AG04449 (cell line): ENCODE measurements at regions of chr15 and their contacts with region 1.

Region 1: GRCh38 chr15:40452296-40453090 is 11.7 kb downstream of the BAHD1 start:
- DNase-seq: no peak
- H3K4me3 ChIP-seq: no peak overlapping the region
- CTCF ChIP-seq: no peak

Region 2: GRCh38 chr15:40427188-40427587 is 25.3 kb before region 1 on chr15:
- CTCF ChIA-PET with region 1: no interaction called
- POLR2A ChIA-PET with region 1: no interaction called
- DNase-seq: no peak
- H3K4me3 ChIP-seq: no peak overlapping the region
- CTCF ChIP-seq: no peak

Region 3: DNA sequence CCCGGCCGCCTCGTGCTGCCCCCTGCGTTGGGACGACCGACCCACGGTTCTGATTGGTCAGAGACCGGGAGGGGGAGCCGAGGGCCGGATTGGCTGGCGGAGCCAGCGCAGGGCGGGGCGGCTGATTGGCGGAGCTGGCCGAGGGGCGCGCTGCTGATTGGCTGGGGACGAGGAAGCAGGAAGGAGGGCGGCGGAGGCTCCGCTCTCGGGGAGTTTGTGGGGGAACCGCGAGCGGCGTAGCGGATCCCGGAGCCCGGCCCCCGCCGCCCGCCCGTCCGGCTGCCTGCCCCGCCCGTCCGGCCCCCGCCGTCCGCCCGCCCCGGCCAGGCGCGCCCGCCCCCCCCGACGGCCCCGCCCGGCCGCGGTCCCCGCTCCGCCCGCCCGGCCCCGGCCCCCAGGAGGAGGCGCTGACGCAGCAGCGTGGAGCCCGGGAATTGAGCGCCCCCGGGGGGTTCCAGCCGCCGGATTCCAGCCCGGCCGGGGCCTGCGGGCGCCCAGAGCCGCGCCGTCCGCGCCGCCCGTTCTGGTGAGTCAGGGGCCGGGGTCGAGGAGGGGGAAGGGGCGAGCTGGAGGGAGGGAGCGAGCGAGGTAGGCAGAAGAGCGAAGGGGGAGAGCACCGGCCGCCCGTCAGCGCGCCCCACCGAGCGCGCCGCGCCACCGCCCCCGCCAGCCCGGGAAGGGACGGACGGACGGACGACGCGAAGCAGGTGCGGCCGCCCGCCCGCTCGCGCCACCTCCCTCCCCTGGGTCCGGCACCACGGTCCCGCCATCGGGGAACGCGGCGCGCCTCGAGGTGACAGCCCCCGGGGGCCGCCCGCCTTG is 11.5 kb before region 1 on chr15 and contains the start of gene BAHD1:
- CTCF ChIA-PET with region 1: interaction called, 25 read pairs
- POLR2A ChIA-PET with region 1: no interaction called
- DNase-seq: peak; percentile 49
- H3K4me3 ChIP-seq: peak within 1 kb of the TSS; percentile 67
- CTCF ChIP-seq: peak; percentile 23